Activated naive CD4-positive, alpha-beta T cell treated with anti-CD3 and anti-CD28 coated beads for 36 hours (primary cell): ENCODE measurements at regions of chr19 and their contacts with region 1.

Region 1: GRCh38 chr19:10936661-10937084 is 8.1 kb downstream of the TIMM29 start:
- DNase-seq: peak; percentile 46
- H3K4me3 Mint-ChIP-seq: no peak overlapping the region
- H3K27ac Mint-ChIP-seq: no peak overlapping the region
- H3K4me1 Mint-ChIP-seq: peaks cover 6% of the 10 kb centered on the region
- H3K27me3 Mint-ChIP-seq: no peaks in the 10 kb centered on the region

Region 2: DNA sequence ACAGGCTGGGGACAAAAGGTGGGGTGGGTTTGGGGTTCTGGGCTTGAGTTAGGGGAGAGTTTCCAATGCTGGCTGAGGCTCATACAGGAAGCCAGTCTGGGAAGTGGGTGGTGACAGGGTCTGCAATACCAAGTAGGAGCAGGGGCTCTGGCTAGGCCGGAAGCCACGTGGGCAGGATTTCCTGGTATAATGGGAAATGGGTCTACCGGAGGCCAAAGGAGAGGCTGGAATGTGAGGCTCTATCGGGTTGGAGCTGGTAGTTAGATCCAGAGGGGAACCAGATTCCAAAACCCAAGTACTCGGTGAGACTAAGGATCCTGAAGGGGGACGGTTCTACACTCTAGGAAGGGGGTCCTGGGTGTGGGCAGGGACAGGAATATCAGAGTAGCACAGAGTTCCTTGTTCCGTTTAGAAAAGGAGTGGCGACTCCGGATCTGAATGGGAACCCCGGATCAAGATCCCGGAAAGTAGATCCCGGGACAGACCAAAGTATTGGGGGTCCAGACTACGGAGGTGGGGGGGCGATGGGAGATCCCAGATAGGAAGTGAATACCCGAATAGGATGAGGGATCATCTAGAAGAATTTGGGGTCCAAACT is 534.1 kb before region 1 on chr19:
- CTCF ChIA-PET with region 1: no interaction called
- intact Hi-C with region 1: no loop called
- DNase-seq: no peak
- H3K4me3 Mint-ChIP-seq: peak overlapping the region; percentile 91
- H3K27ac Mint-ChIP-seq: peak overlapping the region; percentile 77
- H3K4me1 Mint-ChIP-seq: peaks cover 60% of the 10 kb centered on the region
- H3K27me3 Mint-ChIP-seq: no peaks in the 10 kb centered on the region

Region 3: GRCh38 chr19:10864538-10864899 is 72.2 kb before region 1 on chr19:
- CTCF ChIA-PET with region 1: no interaction called
- intact Hi-C with region 1: no loop called
- DNase-seq: peak; percentile 94
- H3K4me3 Mint-ChIP-seq: no peak overlapping the region
- H3K27ac Mint-ChIP-seq: no peak overlapping the region
- H3K4me1 Mint-ChIP-seq: peaks cover 15% of the 10 kb centered on the region
- H3K27me3 Mint-ChIP-seq: no peaks in the 10 kb centered on the region

Region 4: DNA sequence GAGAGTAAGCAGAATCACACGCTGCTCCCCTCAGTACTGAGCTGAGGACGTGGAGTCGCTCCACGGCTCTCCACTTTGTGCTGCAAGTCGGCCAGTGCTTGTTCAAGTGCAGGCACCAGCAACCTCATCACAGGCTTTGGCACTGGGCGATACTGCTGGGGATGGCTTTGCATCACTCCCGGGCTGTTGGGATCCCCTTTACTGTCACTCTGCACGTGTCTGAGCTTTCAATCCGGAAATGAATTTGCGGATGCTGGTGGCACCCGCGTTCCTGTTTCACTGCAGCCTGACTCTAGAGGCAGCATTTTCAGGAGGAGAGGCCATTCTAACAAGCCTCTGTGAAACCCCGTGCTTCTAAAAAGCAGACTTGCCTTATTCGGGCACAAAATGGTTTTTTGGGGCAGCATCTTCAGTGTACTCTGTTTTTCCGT is 43.3 kb after region 1 on chr19:
- CTCF ChIA-PET with region 1: interaction called, 5 read pairs
- intact Hi-C with region 1: loop called (anchors 5 kb)
- DNase-seq: peak; percentile 60
- H3K4me3 Mint-ChIP-seq: no peak overlapping the region
- H3K27ac Mint-ChIP-seq: peak overlapping the region; percentile 59
- H3K4me1 Mint-ChIP-seq: peaks cover 25% of the 10 kb centered on the region
- H3K27me3 Mint-ChIP-seq: no peaks in the 10 kb centered on the region

Region 5: GRCh38 chr19:11014403-11014911 is 77.8 kb after region 1 on chr19:
- CTCF ChIA-PET with region 1: interaction called, 13 read pairs
- intact Hi-C with region 1: loop called (anchors 5 kb)
- DNase-seq: no peak
- H3K4me3 Mint-ChIP-seq: no peak overlapping the region
- H3K27ac Mint-ChIP-seq: no peak overlapping the region
- H3K4me1 Mint-ChIP-seq: no peaks in the 10 kb centered on the region
- H3K27me3 Mint-ChIP-seq: no peaks in the 10 kb centered on the region

Region 6: DNA sequence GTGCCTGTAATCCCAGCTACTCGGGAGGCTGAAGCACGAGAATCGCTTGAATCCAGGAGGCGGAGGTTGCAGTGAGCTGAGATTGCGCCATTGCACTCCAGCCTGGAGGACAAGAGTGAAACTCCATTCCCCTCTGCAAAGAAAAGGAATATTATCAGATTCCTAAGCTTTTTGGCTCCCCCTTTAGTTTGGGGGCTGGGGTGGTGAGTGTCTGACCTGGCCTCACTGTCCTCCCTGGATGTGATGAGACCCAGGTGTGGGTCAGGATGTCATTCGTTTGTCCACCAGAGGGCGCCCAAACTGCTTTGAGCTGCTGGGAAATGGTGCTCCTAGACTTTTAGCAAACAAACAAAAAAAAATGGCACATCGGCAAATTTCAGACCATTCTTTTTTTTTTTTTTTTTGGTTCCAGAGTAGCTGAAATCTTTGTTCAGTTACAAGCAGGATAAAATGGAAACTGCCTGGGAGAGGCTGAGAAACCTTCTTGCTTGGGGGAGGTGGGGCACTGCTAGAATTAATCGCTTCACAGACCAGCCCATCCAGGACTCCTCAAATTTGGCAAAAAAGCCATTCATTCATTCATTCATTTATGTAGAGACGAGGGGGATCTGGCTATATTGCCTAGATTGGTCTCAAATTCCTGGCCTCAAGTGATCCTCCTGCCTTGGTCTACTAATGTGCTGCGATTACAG is 189.5 kb after region 1 on chr19:
- CTCF ChIA-PET with region 1: interaction called, 10 read pairs
- intact Hi-C with region 1: loop called (anchors 2 kb)
- DNase-seq: peak; percentile 88
- H3K4me3 Mint-ChIP-seq: no peak overlapping the region
- H3K27ac Mint-ChIP-seq: peak overlapping the region; percentile 18
- H3K4me1 Mint-ChIP-seq: no peaks in the 10 kb centered on the region
- H3K27me3 Mint-ChIP-seq: no peaks in the 10 kb centered on the region